ENCODE measurements at regions of chr1 and their contacts with region 1.

Region 1: GRCh38 chr1:212782422-212783154 is 9.0 kb downstream of the NSL1 start:
- DNase-seq: peak in 1 of 4 experiments; percentile 23
- ATAC-seq: peak; percentile 84
- H3K4me3 ChIP-seq: no peak overlapping the region
- H3K27ac ChIP-seq: no peak overlapping the region
- H3K4me1 ChIP-seq: no peaks in the 10 kb centered on the region
- H3K27me3 ChIP-seq: no peaks in the 10 kb centered on the region
- CTCF ChIP-seq: peak in 2 of 3 experiments; percentile 50 to 81; a peak in 4 of 6 replicates
- EP300 ChIP-seq: no peak
- POLR2A ChIP-seq: no peak
- RAD21 ChIP-seq: peak; percentile 81 to 82

Region 2: GRCh38 chr1:212498283-212499040 is 284.1 kb before region 1 on chr1:
- CTCF ChIA-PET with region 1: no interaction called
- POLR2A ChIA-PET with region 1: no interaction called
- in situ Hi-C with region 1: no loop called
- intact Hi-C with region 1: no loop called
- DNase-seq: peak in 1 of 4 experiments; percentile 50
- ATAC-seq: no peak
- H3K4me3 ChIP-seq: no peak overlapping the region
- H3K27ac ChIP-seq: no peak overlapping the region
- H3K4me1 ChIP-seq: peaks cover 0 to 6% of the 10 kb centered on the region in 2 experiments; a peak in 3 of 5 replicates
- H3K27me3 ChIP-seq: peaks cover 40 to 60% of the 10 kb centered on the region in 2 experiments
- CTCF ChIP-seq: no peak
- EP300 ChIP-seq: no peak
- POLR2A ChIP-seq: no peak
- RAD21 ChIP-seq: no peak

Region 3: DNA sequence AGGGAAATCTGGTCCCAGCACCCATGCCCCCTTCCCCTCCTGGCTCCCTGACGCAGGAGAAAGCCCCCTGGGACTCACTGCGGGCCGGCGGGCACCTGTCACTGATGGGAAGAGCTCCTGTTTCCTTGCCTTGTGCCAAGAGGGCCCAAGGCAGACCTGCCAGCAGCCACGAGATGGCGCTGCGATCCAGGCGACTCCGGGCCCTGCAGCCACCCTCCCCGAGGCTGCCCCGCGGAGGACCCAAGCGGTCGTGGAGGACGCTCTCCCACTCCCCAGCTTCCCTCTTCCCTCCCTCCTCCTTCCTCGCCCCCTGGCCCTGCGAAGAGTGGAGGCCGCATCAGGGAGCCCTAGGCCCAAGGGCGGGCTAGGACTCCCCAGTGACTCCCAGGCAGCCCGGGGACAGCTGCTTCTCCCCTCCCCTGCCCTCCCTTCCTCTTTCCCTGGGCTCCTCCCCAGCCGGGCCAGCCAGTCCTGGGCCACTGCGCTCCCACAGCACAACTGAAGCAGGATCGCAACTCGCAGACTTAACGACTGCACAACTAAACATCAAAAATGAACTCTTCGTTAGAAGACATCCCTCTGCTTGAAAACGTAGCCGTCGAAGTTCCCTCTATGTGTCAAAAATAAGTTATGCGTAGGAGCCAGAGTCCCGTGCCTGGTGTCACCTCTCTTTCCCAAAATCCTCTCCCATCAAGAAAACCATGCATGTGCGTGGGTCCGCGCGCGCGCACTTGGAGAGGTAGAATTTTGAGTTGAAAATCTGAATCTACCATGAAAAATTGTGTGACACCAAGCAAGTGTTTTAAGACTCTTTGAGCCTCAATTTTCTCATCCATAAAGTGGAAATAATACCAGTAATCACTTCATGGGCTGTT is 117.1 kb before region 1 on chr1:
- CTCF ChIA-PET with region 1: interaction called, 14 read pairs
- POLR2A ChIA-PET with region 1: no interaction called
- in situ Hi-C with region 1: no loop called
- intact Hi-C with region 1: loop called (anchors 1 kb)
- DNase-seq: peak; percentile 85 to 88 (median 86)
- ATAC-seq: peak; percentile 99
- H3K4me3 ChIP-seq: peak overlapping the region; percentile 40
- H3K27ac ChIP-seq: no peak overlapping the region
- H3K4me1 ChIP-seq: peaks cover 3 to 11% of the 10 kb centered on the region in 2 experiments; a peak in 4 of 5 replicates
- H3K27me3 ChIP-seq: peaks cover 13 to 35% of the 10 kb centered on the region in 2 experiments; a peak in 4 of 5 replicates
- CTCF ChIP-seq: peak; percentile 94 to 95 (median 95)
- EP300 ChIP-seq: no peak
- POLR2A ChIP-seq: no peak
- RAD21 ChIP-seq: peak; percentile 97 to 98

Region 4: DNA sequence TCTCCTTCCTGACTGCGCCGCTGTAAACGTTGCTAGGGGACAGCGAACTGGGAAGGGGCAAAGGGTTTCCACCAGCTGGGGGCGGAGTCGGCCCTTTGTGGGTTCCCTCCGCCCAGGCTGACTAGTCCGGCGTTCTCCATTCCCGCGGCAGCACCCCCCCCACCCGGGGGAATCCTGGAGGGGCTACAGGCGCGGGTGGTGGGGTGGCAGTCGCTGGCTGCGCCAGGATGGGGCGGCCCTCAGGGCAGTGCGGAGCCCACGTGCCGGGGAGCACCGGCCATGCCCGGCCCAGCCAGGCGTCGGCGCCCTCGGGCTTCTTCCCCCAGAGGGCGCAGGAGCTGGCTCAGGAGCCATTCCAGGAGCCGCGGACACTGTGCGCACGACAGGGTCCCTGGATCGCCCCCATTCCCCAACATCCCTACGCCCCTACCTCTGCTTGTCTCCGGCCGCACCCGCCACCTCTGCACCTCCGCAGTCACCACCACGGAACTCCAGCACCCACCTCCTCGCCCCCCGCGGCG is 83.4 kb before region 1 on chr1:
- CTCF ChIA-PET with region 1: interaction called, 12 read pairs
- POLR2A ChIA-PET with region 1: no interaction called
- in situ Hi-C with region 1: no loop called
- intact Hi-C with region 1: loop called (anchors 2 kb)
- DNase-seq: peak; percentile 75 to 78 (median 76)
- ATAC-seq: peak; percentile 94
- H3K4me3 ChIP-seq: peak overlapping the region; percentile 46
- H3K27ac ChIP-seq: no peak overlapping the region
- H3K4me1 ChIP-seq: peaks cover 19 to 23% of the 10 kb centered on the region in 2 experiments
- H3K27me3 ChIP-seq: peaks cover 51 to 53% of the 10 kb centered on the region in 2 experiments
- CTCF ChIP-seq: peak; percentile 73 to 96 (median 82)
- EP300 ChIP-seq: no peak
- POLR2A ChIP-seq: no peak
- RAD21 ChIP-seq: peak; percentile 56 to 70

Region 5: DNA sequence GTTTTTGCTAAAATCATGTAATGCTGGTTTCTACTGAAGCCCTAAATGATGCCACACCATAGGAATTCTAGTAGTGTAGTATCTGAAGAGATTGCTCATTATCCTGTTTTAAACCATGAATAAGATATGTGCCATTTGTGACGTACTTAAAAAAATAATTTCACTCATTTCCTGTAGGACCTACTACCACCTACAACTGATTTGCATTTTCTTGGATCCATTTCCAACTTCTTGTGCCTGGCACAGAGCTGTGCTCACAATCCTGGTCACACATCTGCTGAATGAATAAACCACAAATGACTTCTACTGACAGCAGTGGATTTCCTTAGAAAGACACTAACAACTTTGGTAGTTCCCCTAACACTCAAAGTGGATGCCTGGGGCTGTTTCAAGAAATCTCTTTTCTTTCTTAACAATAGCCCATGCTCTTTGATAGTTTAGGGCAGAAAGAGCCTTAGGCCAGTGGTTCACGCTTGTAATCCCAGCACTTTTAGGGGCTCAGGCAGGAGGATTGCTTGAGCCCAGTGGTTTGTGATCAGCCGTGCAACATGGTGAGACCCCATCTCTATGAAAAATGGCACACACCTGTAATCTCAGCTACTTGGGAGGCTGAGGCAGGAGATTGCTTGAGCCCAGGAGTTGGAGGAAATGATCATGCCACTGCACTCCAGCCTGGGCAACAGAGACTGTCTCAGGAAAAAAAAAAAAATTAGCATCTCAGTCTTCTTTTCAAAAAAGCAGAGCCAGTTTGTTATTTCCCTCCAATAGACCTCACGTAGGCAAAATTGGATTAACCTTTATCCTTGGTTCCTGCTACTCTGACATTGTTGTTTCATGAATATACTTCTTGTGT is 69.9 kb before region 1 on chr1:
- CTCF ChIA-PET with region 1: no interaction called
- POLR2A ChIA-PET with region 1: no interaction called
- in situ Hi-C with region 1: no loop called
- intact Hi-C with region 1: no loop called
- DNase-seq: no peak
- ATAC-seq: no peak
- H3K4me3 ChIP-seq: no peak overlapping the region
- H3K27ac ChIP-seq: no peak overlapping the region
- H3K4me1 ChIP-seq: no peaks in the 10 kb centered on the region
- H3K27me3 ChIP-seq: peaks cover 6 to 10% of the 10 kb centered on the region in 2 experiments; a peak in 3 of 5 replicates
- CTCF ChIP-seq: no peak
- EP300 ChIP-seq: no peak
- POLR2A ChIP-seq: no peak
- RAD21 ChIP-seq: no peak

Region 6: GRCh38 chr1:212749821-212750535 is 32.6 kb before region 1 on chr1:
- CTCF ChIA-PET with region 1: interaction called, 5 read pairs
- POLR2A ChIA-PET with region 1: no interaction called
- in situ Hi-C with region 1: no loop called
- intact Hi-C with region 1: loop called (anchors 2 kb)
- DNase-seq: peak; percentile 64 to 68 (median 67)
- ATAC-seq: peak; percentile 86
- H3K4me3 ChIP-seq: no peak overlapping the region
- H3K27ac ChIP-seq: no peak overlapping the region
- H3K4me1 ChIP-seq: peaks cover 0 to 2% of the 10 kb centered on the region in 2 experiments; a peak in 1 of 5 replicates
- H3K27me3 ChIP-seq: no peaks in the 10 kb centered on the region
- CTCF ChIP-seq: peak; percentile 71 to 83 (median 82)
- EP300 ChIP-seq: 0 out of 2 replicates have a peak, but pooled peaks have one; percentile 28
- POLR2A ChIP-seq: no peak
- RAD21 ChIP-seq: peak; percentile 54 to 77